ENCODE measurements at regions of chr1 and their contacts with region 1.

Region 1: DNA sequence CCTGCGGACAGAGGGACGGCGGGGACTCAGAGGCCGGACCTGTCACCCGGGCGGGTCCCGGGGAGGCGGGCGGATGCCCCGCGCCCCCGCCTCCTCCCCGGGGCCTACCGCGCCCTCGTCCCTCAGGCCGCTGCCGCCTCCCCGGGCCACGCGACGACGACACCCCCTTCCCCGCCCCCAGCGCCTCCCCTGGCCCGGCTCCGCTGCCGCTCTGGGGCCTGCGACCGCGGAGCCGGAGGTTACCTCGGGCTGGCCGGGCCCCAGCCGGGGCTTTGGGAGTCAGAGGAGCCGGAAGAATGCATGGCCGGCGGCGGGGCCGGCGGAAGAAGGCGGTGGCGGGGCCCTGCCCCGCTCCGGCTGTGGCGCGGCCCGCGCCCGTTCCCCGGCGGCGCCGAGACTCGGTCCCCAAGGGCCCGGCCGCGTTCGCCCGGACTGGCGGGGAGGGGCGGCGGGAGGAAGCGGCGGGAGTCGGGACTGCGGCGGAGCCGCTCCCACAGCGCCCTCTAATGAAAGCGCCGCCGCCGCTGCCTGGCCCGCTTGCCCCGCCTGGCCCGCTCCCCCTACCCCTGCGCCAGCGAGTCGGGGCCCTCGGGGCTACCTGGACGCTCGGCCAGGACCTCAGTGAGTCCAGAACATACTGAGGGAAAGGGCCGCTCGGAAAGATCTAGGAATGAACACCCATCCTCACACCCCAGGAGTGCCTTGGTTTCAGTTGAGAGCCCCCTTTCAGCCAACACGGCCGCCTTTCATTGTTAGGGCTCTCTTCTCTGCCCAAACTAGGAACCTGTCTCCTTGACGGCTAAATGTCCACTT is at the start of gene LPGAT1:
- DNase-seq: peak; percentile 76
- H3K4me3 ChIP-seq: peak within 1 kb of the TSS; percentile 66
- H3K27ac ChIP-seq: peak within 1 kb of the TSS; percentile 83
- H3K4me1 ChIP-seq: no peaks in the 10 kb centered on the region
- H3K27me3 ChIP-seq: no peaks in the 10 kb centered on the region
- CTCF ChIP-seq: peak; percentile 47
- total RNA-seq, gene LPGAT1: 44.2 to 50.8 TPM

Region 2: DNA sequence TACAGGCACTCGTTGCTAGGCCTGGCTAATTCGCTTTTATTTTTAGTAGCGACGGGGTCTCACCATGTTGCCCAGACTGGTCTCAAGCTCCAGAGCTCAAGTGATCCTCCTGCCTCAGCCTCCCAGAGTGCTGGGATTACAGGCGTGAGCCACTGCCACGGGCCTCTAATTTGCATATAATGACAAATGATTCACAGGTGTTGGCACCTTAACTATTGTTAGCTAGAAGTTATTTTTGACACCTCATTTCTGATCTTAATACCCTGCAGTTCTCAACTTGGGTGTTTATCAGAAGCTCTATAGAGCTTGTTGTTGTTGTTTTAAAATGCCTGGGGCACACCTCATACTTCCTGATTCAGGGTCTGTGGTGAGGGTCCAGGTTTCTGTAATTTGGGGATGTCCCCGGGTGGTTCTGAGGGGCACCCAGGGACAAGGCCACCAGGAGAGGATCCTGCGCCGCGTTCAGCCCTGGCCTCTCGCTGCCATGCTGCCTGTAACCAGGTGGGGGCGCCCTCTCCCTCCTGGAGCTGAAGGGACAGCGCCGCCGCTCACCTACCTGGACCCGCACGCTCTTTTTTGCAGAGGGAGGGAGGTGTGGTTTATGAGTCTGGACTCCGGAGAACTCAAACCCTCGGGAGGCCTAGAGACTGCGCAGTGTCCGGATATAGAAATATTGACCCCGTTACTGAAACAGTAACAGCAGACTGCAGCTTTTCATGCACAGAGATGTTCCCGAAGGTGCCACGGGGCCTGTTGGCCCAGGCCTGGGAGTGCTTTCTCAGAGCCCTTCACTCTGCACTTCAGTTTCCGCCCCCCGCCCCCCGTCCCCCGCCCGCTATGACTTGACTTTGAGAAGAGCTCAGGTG is 132.1 kb before region 1 on chr1:
- intact Hi-C with region 1: loop called (anchors 5 kb)
- DNase-seq: peak; percentile 88
- H3K4me3 ChIP-seq: no peak overlapping the region
- H3K27ac ChIP-seq: no peak overlapping the region
- H3K4me1 ChIP-seq: no peaks in the 10 kb centered on the region
- H3K27me3 ChIP-seq: no peaks in the 10 kb centered on the region
- CTCF ChIP-seq: peak; percentile 96

Region 3: GRCh38 chr1:211944733-211945500 is 114.4 kb after region 1 on chr1:
- intact Hi-C with region 1: loop called (anchors 5 kb)
- DNase-seq: peak; percentile 81
- H3K4me3 ChIP-seq: no peak overlapping the region
- H3K27ac ChIP-seq: no peak overlapping the region
- H3K4me1 ChIP-seq: no peaks in the 10 kb centered on the region
- H3K27me3 ChIP-seq: no peaks in the 10 kb centered on the region
- CTCF ChIP-seq: peak; percentile 71

Region 4: GRCh38 chr1:212035123-212035834 is 204.7 kb after region 1 on chr1 and contains the starts of genes DTL and INTS7:
- intact Hi-C with region 1: loop called (anchors 10 kb)
- DNase-seq: peak; percentile 99
- H3K4me3 ChIP-seq: peak within 1 kb of the TSS; percentile 66
- H3K27ac ChIP-seq: peak within 1 kb of the TSS; percentile 92
- H3K4me1 ChIP-seq: peaks cover 6% of the 10 kb centered on the region
- H3K27me3 ChIP-seq: no peaks in the 10 kb centered on the region
- CTCF ChIP-seq: peak; percentile 91
- total RNA-seq, gene DTL: 5.2 to 19.9 TPM
- total RNA-seq, gene INTS7: 11.0 to 18.5 TPM

Region 5: GRCh38 chr1:212045981-212046380 is 215.4 kb after region 1 on chr1:
- intact Hi-C with region 1: no loop called
- DNase-seq: no peak
- H3K4me3 ChIP-seq: no peak overlapping the region
- H3K27ac ChIP-seq: no peak overlapping the region
- H3K4me1 ChIP-seq: no peaks in the 10 kb centered on the region
- H3K27me3 ChIP-seq: no peaks in the 10 kb centered on the region
- CTCF ChIP-seq: no peak